Breast epithelium (tissue), 4 donors: ENCODE measurements at regions of chr13 and their contacts with region 1.

Region 1: GRCh38 chr13:113458253-113459065 is 5.2 kb upstream of the ADPRHL1 start:
- DNase-seq: no peak
- H3K4me3 ChIP-seq: no peak overlapping the region
- H3K27ac ChIP-seq: no peak overlapping the region
- H3K4me1 ChIP-seq: no peaks in the 10 kb centered on the region
- H3K27me3 ChIP-seq: no peaks in the 10 kb centered on the region
- CTCF ChIP-seq: no peak
- POLR2A ChIP-seq: no peak

Region 2: DNA sequence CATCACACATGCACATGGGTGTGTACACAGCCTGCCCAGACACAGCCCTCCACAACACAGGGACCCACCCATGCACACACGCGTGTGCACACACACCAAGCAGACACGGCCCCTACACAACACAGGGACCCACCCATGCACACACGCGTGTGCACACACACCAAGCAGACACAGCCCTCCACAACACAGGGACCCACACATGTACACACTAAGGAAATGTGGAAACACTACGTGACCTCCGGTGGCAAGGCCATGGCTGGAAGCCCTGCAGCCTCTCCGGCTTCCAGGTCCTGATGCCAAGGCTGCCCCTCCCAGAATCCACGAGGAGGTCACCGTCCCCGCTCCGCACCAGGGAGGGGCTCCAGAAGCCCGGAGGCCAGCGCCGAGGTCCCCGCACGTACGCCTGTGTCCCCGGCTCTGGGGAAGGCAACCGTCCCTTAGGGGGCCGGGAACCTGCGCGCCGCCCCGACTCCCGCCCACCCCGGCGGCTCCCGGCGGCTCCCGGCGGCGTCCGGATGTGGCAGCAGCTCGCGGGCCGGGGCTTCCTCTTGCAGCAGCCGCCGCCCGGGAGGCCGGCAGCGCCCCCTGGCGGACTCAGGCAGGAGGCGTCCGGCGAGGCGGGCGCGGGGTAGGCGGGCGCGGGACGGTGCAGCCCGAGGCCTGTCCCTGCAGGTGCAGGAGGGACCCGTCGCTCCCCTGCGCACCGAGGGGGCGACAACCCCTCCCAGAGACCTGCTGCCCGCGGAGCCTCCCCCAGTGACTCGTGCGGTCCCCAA is 64.7 kb before region 1 on chr13:
- intact Hi-C with region 1: no loop called
- DNase-seq: peak in 1 of 2 donors; percentile 48
- H3K4me3 ChIP-seq: peak overlapping the region; percentile 52 to 89 (median 70)
- H3K27ac ChIP-seq: peak overlapping the region in 1 of 2 donors; percentile 30
- H3K4me1 ChIP-seq: no peaks in the 10 kb centered on the region
- H3K27me3 ChIP-seq: no peaks in the 10 kb centered on the region
- CTCF ChIP-seq: peak; percentile 16 to 91 (median 28)
- POLR2A ChIP-seq: no peak

Region 3: DNA sequence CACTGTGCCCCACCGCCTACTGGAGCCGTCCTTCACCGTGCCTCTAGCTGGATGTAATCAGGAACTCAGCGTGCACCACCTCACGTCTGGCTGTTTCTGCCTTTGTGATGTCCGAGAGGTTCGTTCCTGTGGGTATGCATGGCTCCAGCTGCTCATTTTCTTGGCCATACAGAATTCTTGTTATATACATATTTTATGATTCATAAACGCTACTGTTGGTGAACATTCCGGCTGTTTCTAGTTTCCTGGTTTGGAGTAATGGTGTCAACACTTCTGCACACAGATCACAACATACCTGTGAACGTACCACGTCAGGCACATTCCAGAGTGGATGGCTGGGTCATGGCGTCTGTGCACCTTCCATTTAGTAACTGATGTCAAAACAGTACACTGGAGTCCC is 17.5 kb after region 1 on chr13:
- intact Hi-C with region 1: loop called (anchors 1 kb)
- DNase-seq: no peak
- H3K4me3 ChIP-seq: no peak overlapping the region
- H3K27ac ChIP-seq: no peak overlapping the region
- H3K4me1 ChIP-seq: no peaks in the 10 kb centered on the region
- H3K27me3 ChIP-seq: no peaks in the 10 kb centered on the region
- CTCF ChIP-seq: no peak
- POLR2A ChIP-seq: no peak